A673 (cell line): ENCODE measurements at regions of chr1 and their contacts with region 1.

Region 1: GRCh38 chr1:44714944-44715571 is 15.9 kb downstream of the RNU5D-1 start:
- DNase-seq: peak; percentile 83
- H3K4me3 ChIP-seq: no peak overlapping the region
- H3K27ac ChIP-seq: no peak overlapping the region
- H3K4me1 ChIP-seq: no peaks in the 10 kb centered on the region
- H3K27me3 ChIP-seq: no peaks in the 10 kb centered on the region
- CTCF ChIP-seq: peak; percentile 93

Region 2: GRCh38 chr1:44294588-44295007 is 420.5 kb before region 1 on chr1:
- CTCF ChIA-PET with region 1: no interaction called
- POLR2A ChIA-PET with region 1: no interaction called
- intact Hi-C with region 1: no loop called
- DNase-seq: no peak
- H3K4me3 ChIP-seq: no peak overlapping the region
- H3K27ac ChIP-seq: no peak overlapping the region
- H3K4me1 ChIP-seq: no peaks in the 10 kb centered on the region
- H3K27me3 ChIP-seq: no peaks in the 10 kb centered on the region
- CTCF ChIP-seq: no peak

Region 3: GRCh38 chr1:44730741-44731512 is 15.9 kb after region 1 on chr1 and contains the start of gene RNU5D-1:
- CTCF ChIA-PET with region 1: interaction called, 3 read pairs
- POLR2A ChIA-PET with region 1: interaction called, 16 read pairs
- intact Hi-C with region 1: no loop called
- DNase-seq: peak; percentile 98
- H3K4me3 ChIP-seq: no peak within 1 kb of the TSS
- H3K27ac ChIP-seq: peak within 1 kb of the TSS; percentile 99
- H3K4me1 ChIP-seq: peaks cover 4% of the 10 kb centered on the region
- H3K27me3 ChIP-seq: no peaks in the 10 kb centered on the region
- CTCF ChIP-seq: peak; percentile 90
- total RNA-seq, gene RNU5D-1: not detected in 2 replicates

Region 4: DNA sequence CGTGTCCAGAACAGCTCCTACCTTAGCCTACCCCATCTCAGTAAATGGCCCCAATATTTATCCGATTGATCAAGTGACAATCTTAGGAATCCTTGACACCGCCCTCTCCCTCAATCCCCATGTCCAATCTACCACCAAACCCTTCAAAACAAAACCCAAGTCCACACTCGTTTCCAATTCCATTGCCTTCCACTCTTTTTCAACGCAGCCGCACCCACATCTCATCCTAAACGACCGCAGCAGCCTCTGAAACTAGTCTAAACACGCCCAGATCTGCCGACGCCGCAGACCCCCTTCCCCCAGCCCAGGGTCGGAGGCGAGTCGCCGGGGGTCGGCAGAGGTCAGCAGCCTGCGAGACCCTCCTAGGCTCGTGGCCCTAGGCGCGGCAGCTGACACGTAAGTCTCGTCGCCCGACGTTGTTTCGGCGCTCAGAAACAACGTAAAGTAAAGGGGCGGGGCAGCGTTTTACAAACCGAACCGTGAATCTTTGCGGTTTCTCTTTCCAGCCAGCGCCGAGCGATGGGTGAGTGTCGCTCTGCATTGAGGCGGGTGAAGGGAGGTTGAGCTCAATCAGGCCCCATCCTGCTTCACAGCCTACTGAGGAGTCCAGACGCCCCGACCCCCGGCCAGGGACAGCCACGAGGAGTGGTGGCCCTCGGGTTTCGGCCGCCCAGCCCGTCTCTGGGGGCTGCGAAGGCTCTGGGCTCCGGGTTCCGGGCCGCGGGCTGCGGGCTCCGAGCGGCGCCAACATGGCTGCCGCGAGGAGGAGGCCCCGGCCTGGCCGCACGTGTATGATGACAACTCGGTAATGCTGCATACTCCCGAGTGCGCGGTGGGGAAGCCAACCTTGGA is 60.2 kb after region 1 on chr1 and contains the start of gene RPS8:
- CTCF ChIA-PET with region 1: no interaction called
- POLR2A ChIA-PET with region 1: no interaction called
- intact Hi-C with region 1: loop called (anchors 2 kb)
- DNase-seq: peak; percentile 97
- H3K4me3 ChIP-seq: peak within 1 kb of the TSS; percentile 90
- H3K27ac ChIP-seq: peak within 1 kb of the TSS; percentile 94
- H3K4me1 ChIP-seq: peaks cover 7% of the 10 kb centered on the region
- H3K27me3 ChIP-seq: no peaks in the 10 kb centered on the region
- CTCF ChIP-seq: no peak
- total RNA-seq, gene RPS8: 1,717 and 1,734 TPM in 2 replicates

Region 5: GRCh38 chr1:46581681-46582455 is 1866.8 kb after region 1 on chr1:
- CTCF ChIA-PET with region 1: no interaction called
- POLR2A ChIA-PET with region 1: no interaction called
- intact Hi-C with region 1: no loop called
- DNase-seq: no peak
- H3K4me3 ChIP-seq: no peak overlapping the region
- H3K27ac ChIP-seq: no peak overlapping the region
- H3K4me1 ChIP-seq: no peaks in the 10 kb centered on the region
- H3K27me3 ChIP-seq: no peaks in the 10 kb centered on the region
- CTCF ChIP-seq: no peak